Right cardiac atrium (tissue), 5 donors: ENCODE measurements at regions of chr13 and their contacts with region 1.

Region 1: DNA sequence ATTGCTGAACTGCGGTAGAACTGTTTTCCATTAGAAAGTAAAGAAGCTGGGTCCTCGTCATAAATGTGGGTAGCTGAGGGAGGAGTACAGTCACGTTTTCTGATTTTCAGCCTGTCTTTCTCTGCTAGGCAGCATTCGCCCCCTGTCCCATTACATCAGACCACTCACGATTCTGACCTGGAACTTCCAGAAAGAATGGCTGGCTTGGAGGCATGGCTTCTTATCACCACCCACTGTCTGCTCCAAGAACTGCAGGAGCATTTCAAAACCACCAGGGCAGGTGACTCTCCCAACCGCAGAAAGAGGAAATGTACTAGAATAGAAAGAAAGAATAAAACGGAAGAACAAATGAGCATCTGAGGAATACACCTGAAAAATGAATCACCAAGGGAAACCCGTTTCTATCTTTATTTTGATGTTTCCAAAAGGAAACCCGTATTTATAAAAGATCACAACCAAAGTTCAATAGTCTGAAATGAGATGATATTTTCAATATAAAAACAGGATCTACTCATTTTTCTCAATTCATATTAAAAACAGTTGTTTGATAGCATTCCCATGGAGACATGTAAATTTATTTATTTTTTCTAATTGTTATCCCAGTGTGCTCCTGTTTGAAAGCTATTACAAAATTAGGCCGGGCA is 22.1 kb upstream of the POMP start:
- DNase-seq: peak; percentile 33 to 61 (median 58)
- ATAC-seq: peak; percentile 80 to 88
- H3K4me3 ChIP-seq: no peak overlapping the region
- H3K27ac ChIP-seq: no peak overlapping the region
- H3K4me1 ChIP-seq: peaks cover 2% of the 10 kb centered on the region
- H3K27me3 ChIP-seq: no peaks in the 10 kb centered on the region

Region 2: DNA sequence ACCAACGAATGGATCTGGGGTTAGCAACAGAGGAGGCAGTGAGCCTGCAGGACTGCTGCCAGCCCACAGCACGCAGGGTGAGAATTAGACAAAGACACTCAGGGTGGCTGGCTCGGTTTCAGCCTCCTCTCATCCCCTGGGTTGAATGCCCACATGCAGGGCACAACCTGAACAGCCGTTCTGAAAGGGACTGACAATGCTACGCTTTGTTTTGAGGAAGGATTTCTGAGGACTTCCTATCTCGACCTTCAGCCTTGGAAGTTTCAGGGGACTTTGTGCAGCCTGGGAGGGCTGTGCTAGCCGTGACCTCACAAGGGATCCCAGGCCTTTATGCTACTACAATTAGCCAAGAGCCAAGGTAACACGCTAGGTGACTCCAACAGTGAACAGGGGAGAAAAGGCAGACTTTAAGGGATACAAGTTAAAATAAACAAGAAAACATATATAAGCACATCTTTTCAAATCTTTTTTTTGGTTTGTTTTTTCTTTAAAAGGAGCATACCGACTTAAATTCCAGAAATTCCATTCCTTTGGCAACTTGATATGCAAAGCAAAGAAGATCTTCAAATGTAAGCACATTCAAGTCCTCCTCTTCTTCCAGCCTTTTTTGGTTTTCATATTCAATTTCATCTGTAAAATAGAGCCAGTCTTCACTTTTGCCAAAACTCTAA is 613.8 kb before region 1 on chr13:
- intact Hi-C with region 1: no loop called
- DNase-seq: peak in 1 of 3 donors; percentile 70
- ATAC-seq: peak; percentile 31 to 50
- H3K4me3 ChIP-seq: no peak overlapping the region
- H3K27ac ChIP-seq: no peak overlapping the region
- H3K4me1 ChIP-seq: no peaks in the 10 kb centered on the region
- H3K27me3 ChIP-seq: no peaks in the 10 kb centered on the region

Region 3: DNA sequence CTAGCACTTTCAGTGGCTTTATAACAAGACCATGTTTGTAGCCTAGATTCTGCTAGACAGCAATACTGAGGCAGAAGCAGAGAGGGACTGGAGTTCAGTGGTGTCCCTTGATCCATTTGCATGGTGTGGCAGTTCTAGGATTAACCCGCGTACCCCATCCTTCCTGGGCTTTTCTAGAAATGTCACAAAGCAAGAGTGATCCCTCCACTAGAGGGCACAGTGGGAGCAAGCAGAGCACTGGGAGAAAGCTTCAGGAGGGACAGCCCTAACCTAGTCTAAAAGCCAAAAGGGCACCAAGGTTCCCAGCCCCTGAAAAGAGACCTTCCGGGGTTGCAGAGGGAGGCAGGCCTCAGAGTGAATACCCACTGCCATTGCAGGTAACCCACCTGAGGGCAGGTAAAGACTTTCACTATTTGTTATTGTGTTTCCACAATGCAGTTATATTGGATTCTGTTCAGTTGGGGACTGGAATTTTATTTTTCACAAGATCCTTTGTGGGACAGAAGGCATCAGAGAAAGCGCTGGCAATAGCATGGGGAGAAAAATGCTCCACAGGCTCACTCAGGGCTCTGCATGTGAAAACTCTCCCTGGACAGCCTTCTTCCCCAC is 312.5 kb before region 1 on chr13:
- intact Hi-C with region 1: loop called (anchors 2 to 5 kb)
- DNase-seq: peak in 2 of 3 donors; percentile 47 to 69
- ATAC-seq: peak; percentile 77 to 85
- H3K4me3 ChIP-seq: no peak overlapping the region
- H3K27ac ChIP-seq: peak overlapping the region; percentile 26
- H3K4me1 ChIP-seq: no peaks in the 10 kb centered on the region
- H3K27me3 ChIP-seq: no peaks in the 10 kb centered on the region

Region 4: DNA sequence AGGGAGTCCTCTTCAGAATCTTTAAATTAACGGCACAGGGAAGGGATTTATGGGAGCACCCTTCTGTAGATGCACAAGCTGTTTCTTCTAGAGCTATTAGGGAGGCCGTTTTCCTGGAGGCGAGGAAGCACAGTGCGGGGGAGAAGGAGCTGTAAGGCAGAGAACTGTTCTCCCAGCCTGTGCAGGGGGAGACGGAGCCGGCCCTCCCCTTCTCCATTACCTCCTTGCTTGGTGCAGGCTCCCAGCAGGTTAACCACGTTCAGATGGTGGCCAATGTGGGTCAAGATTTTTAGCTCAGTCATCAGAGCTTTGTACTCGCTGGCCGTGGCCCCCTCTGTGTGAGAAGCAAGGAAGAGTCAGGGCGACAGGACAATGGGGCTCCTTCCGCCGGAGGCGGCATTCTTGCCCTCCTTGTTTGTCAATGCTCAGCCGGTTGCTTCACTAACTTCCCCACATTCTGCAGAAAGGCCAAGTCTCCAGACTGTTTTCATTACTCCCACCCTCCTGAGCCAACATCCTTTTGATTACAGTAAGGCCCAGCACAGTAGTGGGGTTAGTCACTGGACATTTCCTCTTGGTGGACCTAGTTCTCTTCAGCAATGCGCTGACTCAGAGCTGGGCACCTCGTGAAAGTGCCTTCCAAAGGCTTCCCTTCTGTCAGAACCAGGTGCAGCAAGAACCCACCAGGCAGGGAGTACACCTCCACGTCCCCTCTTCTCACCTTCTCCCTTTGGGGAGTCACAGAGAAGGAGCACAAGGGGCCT is 307.2 kb before region 1 on chr13:
- intact Hi-C with region 1: loop called (anchors 2 to 5 kb)
- DNase-seq: peak; percentile 52 to 72 (median 62)
- ATAC-seq: peak; percentile 84 to 96
- H3K4me3 ChIP-seq: no peak overlapping the region
- H3K27ac ChIP-seq: no peak overlapping the region
- H3K4me1 ChIP-seq: peaks cover 3% of the 10 kb centered on the region
- H3K27me3 ChIP-seq: no peaks in the 10 kb centered on the region

Region 5: DNA sequence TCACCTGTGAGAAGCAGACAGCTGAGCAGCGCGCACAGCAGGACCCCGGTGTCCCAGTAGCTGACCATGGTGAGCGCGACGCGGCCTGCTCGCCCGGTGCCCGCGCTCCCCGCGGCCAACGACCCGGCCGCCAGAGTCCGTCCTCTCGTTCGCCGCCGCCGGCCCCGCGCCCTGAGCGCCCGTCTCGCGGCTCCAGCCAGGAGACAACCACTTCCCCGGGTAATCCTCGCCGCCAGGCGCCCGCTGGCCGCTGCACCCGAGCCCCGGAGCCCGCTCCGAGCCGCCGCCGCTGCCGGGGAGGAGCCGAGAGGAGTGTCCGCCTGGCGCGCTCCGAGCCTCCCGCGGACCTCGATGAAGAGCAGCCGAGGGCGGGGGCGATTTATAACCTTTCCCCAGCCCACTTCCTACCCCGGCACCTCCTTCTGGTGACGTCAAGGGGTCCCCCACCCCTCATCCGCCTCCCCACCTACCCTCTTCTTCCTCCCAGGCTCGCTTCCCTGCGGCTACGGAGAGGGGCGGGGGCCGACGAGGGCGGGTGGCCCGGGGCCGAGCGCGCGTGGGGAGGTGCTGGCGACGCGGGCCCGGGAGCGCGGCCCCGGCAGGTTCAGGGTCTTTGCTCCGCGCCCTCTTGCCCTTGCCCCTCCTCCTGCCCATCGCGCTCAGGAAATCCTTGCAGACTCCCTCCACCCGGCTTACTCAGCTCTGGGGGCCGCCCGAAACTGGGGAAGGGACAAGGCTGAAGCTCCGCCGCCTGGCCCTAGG is 141.8 kb before region 1 on chr13 and contains the start of gene FLT1:
- intact Hi-C with region 1: loop called in 1 of 4 experiments (anchors 10 kb)
- DNase-seq: peak; percentile 83 to 89 (median 88)
- ATAC-seq: peak; percentile 84 to 94
- H3K4me3 ChIP-seq: peak within 1 kb of the TSS; percentile 54
- H3K27ac ChIP-seq: peak within 1 kb of the TSS; percentile 86
- H3K4me1 ChIP-seq: no peaks in the 10 kb centered on the region
- H3K27me3 ChIP-seq: no peaks in the 10 kb centered on the region
- total RNA-seq, gene FLT1: 31.0 to 53.4 (median 43.0) TPM

Region 6: GRCh38 chr13:28531077-28531844 is 105.5 kb before region 1 on chr13:
- intact Hi-C with region 1: loop called in 1 of 4 experiments (anchors 10 kb)
- DNase-seq: peak; percentile 67 to 86 (median 81)
- ATAC-seq: peak; percentile 62 to 77
- H3K4me3 ChIP-seq: peak overlapping the region; percentile 70
- H3K27ac ChIP-seq: peak overlapping the region; percentile 84
- H3K4me1 ChIP-seq: peaks cover 2% of the 10 kb centered on the region
- H3K27me3 ChIP-seq: no peaks in the 10 kb centered on the region

Region 7: DNA sequence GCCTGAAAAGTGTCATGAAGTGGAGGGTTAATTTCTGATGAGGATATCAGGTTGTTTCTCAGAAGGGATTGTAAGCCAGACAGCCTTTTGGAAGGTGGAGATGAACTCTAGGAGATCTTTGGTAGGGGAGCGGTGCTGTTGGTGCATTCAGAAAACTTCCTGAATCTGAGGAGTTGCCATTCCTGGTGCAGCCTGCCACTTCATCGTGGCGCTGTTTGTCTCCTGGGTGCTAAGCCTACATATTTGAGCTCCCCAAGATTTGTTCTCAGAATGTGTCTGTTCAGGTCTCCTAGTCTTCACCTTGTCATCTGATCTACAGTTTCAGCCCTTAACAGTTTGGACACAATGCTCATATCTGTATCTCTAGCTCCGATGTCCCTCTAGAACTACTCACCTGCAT is 469.0 kb after region 1 on chr13:
- intact Hi-C with region 1: no loop called
- DNase-seq: no peak
- ATAC-seq: no peak
- H3K4me3 ChIP-seq: no peak overlapping the region
- H3K27ac ChIP-seq: no peak overlapping the region
- H3K4me1 ChIP-seq: no peaks in the 10 kb centered on the region
- H3K27me3 ChIP-seq: no peaks in the 10 kb centered on the region